Caco-2 (cell line): ENCODE measurements at regions of chr22 and their contacts with region 1.

Region 1: GRCh38 chr22:37032546-37033460 is 13.3 kb downstream of the MPST start:
- DNase-seq: peak; percentile 96 to 97
- H3K4me3 ChIP-seq: peak overlapping the region; percentile 37
- H3K4me3 Mint-ChIP-seq: peak overlapping the region; percentile 77
- H3K27ac Mint-ChIP-seq: peak overlapping the region; percentile 99
- H3K4me1 ChIP-seq: peaks cover 44% of the 10 kb centered on the region
- H3K4me1 Mint-ChIP-seq: peaks cover 30% of the 10 kb centered on the region
- H3K27me3 ChIP-seq: no peaks in the 10 kb centered on the region
- H3K27me3 Mint-ChIP-seq: no peaks in the 10 kb centered on the region
- CTCF ChIP-seq: no peak

Region 2: DNA sequence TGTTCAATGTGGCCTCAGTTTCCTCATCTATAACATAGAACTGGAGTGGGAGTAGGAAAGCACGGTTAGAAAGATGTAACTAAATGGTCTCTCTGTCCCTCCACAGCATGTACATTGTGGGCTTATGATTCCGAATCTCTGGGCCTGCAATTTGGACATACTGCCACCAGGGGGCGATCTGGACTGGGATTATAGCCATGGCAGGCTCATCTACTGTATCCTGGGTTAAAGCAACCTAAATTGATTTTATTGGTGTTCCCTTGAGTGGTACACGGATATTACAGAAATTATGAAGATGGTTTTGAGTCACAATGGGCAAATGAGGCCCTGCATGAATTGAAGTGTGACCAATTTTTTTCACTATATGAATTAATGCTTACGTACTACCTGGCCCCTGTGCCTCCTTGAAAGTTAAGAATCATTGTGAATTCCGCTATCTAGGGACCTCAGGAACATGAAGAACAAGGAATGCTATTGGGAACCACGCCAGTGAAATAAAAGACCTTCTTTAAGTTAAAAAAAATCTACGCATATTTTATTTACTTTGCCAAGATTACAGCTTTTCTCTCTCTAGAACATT is 46.5 kb before region 1 on chr22:
- CTCF ChIA-PET with region 1: no interaction called
- POLR2A ChIA-PET with region 1: no interaction called
- intact Hi-C with region 1: loop called (anchors 5 kb)
- DNase-seq: peak in 1 of 2 experiments; percentile 33
- H3K4me3 ChIP-seq: no peak overlapping the region
- H3K4me3 Mint-ChIP-seq: no peak overlapping the region
- H3K27ac Mint-ChIP-seq: no peak overlapping the region
- H3K4me1 ChIP-seq: no peaks in the 10 kb centered on the region
- H3K4me1 Mint-ChIP-seq: no peaks in the 10 kb centered on the region
- H3K27me3 ChIP-seq: no peaks in the 10 kb centered on the region; the same call in 1 of the 2 replicates
- H3K27me3 Mint-ChIP-seq: peaks cover 14% of the 10 kb centered on the region
- CTCF ChIP-seq: peak; percentile 57 to 73

Region 3: GRCh38 chr22:37007651-37008050 is 25.2 kb before region 1 on chr22:
- CTCF ChIA-PET with region 1: no interaction called
- POLR2A ChIA-PET with region 1: no interaction called
- intact Hi-C with region 1: no loop called
- DNase-seq: no peak
- H3K4me3 ChIP-seq: no peak overlapping the region
- H3K4me3 Mint-ChIP-seq: no peak overlapping the region
- H3K27ac Mint-ChIP-seq: no peak overlapping the region
- H3K4me1 ChIP-seq: no peaks in the 10 kb centered on the region
- H3K4me1 Mint-ChIP-seq: peaks cover 7% of the 10 kb centered on the region
- H3K27me3 ChIP-seq: no peaks in the 10 kb centered on the region
- H3K27me3 Mint-ChIP-seq: peaks cover 2% of the 10 kb centered on the region
- CTCF ChIP-seq: no peak

Region 4: DNA sequence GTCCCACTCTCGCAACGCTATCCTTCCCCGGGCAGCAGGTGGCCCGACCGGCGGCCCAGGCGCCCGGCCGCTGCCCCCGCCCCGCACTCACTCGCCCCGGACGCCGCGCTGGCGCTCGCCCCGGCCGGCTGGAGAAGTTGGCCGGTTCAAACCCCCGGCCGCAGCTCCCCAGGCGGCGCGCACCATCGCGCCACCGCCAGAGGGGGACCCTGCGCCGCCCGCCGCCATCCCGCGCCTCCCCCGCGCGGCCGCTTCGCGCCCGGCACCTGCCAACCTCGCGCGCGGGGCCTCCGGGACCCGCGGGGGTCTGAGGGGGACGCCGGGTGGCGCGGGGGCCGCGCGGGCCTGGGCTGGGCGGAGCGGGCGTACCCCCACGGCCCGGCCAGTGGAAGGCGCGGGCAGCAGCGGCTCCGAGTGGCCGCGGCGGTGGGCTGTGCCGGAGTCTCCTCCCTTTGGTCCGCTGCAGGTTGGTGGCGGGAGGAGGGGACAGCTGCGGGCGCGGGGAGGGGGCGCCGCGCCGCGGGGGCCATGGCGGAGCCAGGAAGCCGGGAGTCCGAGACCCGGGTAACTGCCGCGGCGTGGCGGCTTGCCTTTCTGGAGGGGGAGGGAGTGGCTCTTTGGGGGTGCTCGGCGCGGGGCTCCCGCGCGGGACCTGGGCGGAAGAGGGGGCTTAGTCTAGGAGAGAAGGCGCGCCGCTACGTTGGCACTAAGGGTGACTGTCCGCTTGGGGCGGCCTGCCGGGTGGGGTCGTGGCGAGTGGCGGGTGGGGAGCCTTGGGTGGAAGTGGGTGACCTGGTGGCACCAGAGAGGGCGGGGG is 13.3 kb before region 1 on chr22 and contains the starts of genes MPST and TST:
- CTCF ChIA-PET with region 1: interaction called, 29 read pairs
- POLR2A ChIA-PET with region 1: interaction called, 39 read pairs
- intact Hi-C with region 1: loop called (anchors 1 kb)
- DNase-seq: peak; percentile 79 to 85
- H3K4me3 ChIP-seq: peak within 1 kb of the TSS; percentile 70
- H3K4me3 Mint-ChIP-seq: peak within 1 kb of the TSS; percentile 96
- H3K27ac Mint-ChIP-seq: peak within 1 kb of the TSS; percentile 91
- H3K4me1 ChIP-seq: peaks cover 16% of the 10 kb centered on the region; the same call in 1 of the 2 replicates
- H3K4me1 Mint-ChIP-seq: no peaks in the 10 kb centered on the region
- H3K27me3 ChIP-seq: no peaks in the 10 kb centered on the region; the same call in 1 of the 2 replicates
- H3K27me3 Mint-ChIP-seq: no peaks in the 10 kb centered on the region
- CTCF ChIP-seq: peak in 1 of 2 experiments; percentile 6
- total RNA-seq, gene MPST: 81.8 and 83.7 TPM in 2 replicates
- total RNA-seq, gene TST: 37.0 and 44.9 TPM in 2 replicates

Region 5: GRCh38 chr22:37043828-37044538 is 11.2 kb after region 1 on chr22:
- CTCF ChIA-PET with region 1: interaction called, 45 read pairs
- POLR2A ChIA-PET with region 1: interaction called, 22 read pairs
- intact Hi-C with region 1: loop called (anchors 1 kb)
- DNase-seq: peak; percentile 88
- H3K4me3 ChIP-seq: no peak overlapping the region
- H3K4me3 Mint-ChIP-seq: peak overlapping the region; percentile 39
- H3K27ac Mint-ChIP-seq: peak overlapping the region; percentile 59
- H3K4me1 ChIP-seq: peaks cover 27% of the 10 kb centered on the region
- H3K4me1 Mint-ChIP-seq: peaks cover 20% of the 10 kb centered on the region
- H3K27me3 ChIP-seq: no peaks in the 10 kb centered on the region
- H3K27me3 Mint-ChIP-seq: no peaks in the 10 kb centered on the region
- CTCF ChIP-seq: peak; percentile 86 to 87

Region 6: GRCh38 chr22:37051391-37052385 is 18.9 kb after region 1 on chr22 and contains the start of gene KCTD17:
- CTCF ChIA-PET with region 1: interaction called, 6 read pairs
- POLR2A ChIA-PET with region 1: interaction called, 15 read pairs
- intact Hi-C with region 1: loop called (anchors 2 kb)
- DNase-seq: peak; percentile 67 to 84
- H3K4me3 ChIP-seq: peak within 1 kb of the TSS; percentile 56
- H3K4me3 Mint-ChIP-seq: peak within 1 kb of the TSS; percentile 72
- H3K27ac Mint-ChIP-seq: no peak within 1 kb of the TSS
- H3K4me1 ChIP-seq: peaks cover 3% of the 10 kb centered on the region; the same call in 1 of the 2 replicates
- H3K4me1 Mint-ChIP-seq: no peaks in the 10 kb centered on the region
- H3K27me3 ChIP-seq: no peaks in the 10 kb centered on the region
- H3K27me3 Mint-ChIP-seq: no peaks in the 10 kb centered on the region
- CTCF ChIP-seq: no peak
- total RNA-seq, gene KCTD17: 17.2 and 19.8 TPM in 2 replicates